Activated B cell treated with CpG ODN at 0.5 μM for 24 hours (primary cell): ENCODE measurements at regions of chrX and their contacts with region 1.

Region 1: DNA sequence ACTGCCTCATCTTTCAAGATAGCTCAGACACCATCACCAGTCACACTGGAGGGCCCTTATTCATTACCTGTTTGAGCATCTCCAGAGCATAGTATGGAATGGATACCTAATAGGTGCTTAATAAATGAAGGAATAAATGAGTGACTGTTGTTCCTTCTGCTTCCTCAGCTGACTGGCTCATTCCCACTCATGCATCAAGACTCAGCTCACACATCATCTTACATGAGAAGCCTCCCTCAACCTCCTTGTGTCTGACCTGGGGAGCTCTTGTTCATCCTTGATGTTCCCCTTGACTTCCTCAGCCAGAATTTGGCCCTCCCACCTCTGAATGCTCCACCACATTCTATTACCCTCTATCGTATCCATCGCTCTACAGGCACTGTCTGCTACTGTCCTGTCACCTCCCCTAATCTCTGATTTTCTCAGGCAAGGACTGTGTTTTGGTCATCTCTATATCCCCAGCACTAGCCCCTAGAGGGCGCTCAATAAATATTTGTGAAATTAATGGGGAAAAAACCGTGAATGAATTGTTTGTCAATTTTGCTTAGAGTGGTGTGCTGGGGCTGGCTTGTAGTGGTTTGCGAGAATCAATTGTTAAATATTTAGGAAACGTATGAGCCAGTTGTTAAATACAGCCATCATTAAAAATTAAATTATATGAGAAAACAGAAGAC is 88.3 kb downstream of the NHSL2 start:
- DNase-seq: no peak
- ATAC-seq: peak; percentile 60
- H3K4me3 Mint-ChIP-seq: no peak overlapping the region
- H3K27ac Mint-ChIP-seq: no peak overlapping the region
- H3K4me1 Mint-ChIP-seq: no peaks in the 10 kb centered on the region
- H3K27me3 Mint-ChIP-seq: peaks cover 10% of the 10 kb centered on the region
- CTCF ChIP-seq: no peak

Region 2: DNA sequence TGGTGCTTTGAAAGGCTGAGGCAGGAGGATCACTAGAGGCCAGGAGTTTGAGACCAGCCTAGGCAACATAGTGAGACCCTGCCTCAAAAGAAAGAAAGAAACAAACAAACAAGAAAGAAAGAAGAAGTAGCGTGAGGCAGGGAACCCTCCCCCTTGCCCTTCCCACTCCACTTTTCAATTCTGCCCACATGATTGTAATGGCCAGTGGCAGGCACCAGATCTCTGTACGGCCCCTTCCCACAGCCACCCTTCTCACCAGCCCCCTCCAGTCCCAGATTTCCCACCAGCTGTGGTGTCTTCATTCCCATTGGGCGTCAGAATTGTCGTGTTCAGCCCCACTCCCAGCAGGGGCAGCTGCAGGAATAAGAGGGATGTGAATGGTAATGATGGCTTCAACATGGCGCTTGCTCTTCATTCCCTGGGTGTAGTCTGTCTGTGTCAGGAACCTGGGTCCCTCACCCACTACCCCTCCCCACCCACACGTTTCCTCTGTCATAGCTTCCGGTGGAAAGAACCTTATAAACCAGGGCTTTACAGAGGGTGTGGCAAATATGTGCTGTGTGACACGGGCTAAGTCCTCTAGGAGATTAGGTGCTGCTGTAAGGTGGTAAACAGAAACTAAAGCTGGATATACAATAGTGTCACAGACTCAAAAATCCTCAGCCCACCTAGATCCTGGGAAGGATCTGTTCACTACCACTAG is 887.7 kb before region 1 on chrX and contains the start of gene IL2RG:
- CTCF ChIA-PET with region 1: no interaction called
- POLR2A ChIA-PET with region 1: no interaction called
- intact Hi-C with region 1: no loop called
- DNase-seq: peak; percentile 37
- ATAC-seq: peak; percentile 90
- H3K4me3 Mint-ChIP-seq: peak within 1 kb of the TSS; percentile 95
- H3K27ac Mint-ChIP-seq: peak within 1 kb of the TSS; percentile 99
- H3K4me1 Mint-ChIP-seq: peaks cover 67% of the 10 kb centered on the region
- H3K27me3 Mint-ChIP-seq: no peaks in the 10 kb centered on the region
- CTCF ChIP-seq: no peak
- total RNA-seq, gene IL2RG: 261 and 264 TPM in 2 replicates

Region 3: DNA sequence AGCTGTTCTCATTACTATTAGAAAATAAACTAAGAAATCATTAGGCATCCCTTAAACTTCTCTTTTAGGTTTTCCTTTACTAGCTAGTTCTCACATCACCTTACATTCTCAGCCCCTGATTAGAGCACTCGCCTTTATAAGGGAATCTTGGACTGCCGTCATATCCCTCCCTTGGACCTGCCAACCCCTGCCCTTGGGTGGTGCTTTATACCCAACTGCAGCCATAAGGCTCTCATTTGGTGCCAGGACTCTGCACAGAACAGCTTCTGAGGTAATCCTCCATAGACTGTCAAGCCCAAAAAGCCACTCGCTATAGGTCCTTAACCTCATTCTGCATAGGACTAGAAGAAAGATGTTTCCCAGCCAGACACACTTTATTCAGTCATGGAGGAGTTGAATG is 20.8 kb before region 1 on chrX:
- CTCF ChIA-PET with region 1: no interaction called
- POLR2A ChIA-PET with region 1: no interaction called
- intact Hi-C with region 1: no loop called
- DNase-seq: no peak
- ATAC-seq: no peak
- H3K4me3 Mint-ChIP-seq: no peak overlapping the region
- H3K27ac Mint-ChIP-seq: no peak overlapping the region
- H3K4me1 Mint-ChIP-seq: no peaks in the 10 kb centered on the region
- H3K27me3 Mint-ChIP-seq: peaks cover 5% of the 10 kb centered on the region
- CTCF ChIP-seq: no peak

Region 4: GRCh38 chrX:72540318-72540717 is 541.3 kb after region 1 on chrX:
- CTCF ChIA-PET with region 1: interaction called, 4 read pairs
- POLR2A ChIA-PET with region 1: no interaction called
- intact Hi-C with region 1: loop called (anchors 5 kb)
- DNase-seq: no peak
- ATAC-seq: no peak
- H3K4me3 Mint-ChIP-seq: no peak overlapping the region
- H3K27ac Mint-ChIP-seq: no peak overlapping the region
- H3K4me1 Mint-ChIP-seq: no peaks in the 10 kb centered on the region
- H3K27me3 Mint-ChIP-seq: no peaks in the 10 kb centered on the region
- CTCF ChIP-seq: no peak